Posterior cingulate gyrus (tissue), 11 donors: ENCODE measurements at regions of chr19 and their contacts with region 1.

Region 1: GRCh38 chr19:38699027-38699346 is 45.3 kb downstream of the CAPN12 start:
- DNase-seq: peak in 1 of 10 donors; percentile 81

Region 2: DNA sequence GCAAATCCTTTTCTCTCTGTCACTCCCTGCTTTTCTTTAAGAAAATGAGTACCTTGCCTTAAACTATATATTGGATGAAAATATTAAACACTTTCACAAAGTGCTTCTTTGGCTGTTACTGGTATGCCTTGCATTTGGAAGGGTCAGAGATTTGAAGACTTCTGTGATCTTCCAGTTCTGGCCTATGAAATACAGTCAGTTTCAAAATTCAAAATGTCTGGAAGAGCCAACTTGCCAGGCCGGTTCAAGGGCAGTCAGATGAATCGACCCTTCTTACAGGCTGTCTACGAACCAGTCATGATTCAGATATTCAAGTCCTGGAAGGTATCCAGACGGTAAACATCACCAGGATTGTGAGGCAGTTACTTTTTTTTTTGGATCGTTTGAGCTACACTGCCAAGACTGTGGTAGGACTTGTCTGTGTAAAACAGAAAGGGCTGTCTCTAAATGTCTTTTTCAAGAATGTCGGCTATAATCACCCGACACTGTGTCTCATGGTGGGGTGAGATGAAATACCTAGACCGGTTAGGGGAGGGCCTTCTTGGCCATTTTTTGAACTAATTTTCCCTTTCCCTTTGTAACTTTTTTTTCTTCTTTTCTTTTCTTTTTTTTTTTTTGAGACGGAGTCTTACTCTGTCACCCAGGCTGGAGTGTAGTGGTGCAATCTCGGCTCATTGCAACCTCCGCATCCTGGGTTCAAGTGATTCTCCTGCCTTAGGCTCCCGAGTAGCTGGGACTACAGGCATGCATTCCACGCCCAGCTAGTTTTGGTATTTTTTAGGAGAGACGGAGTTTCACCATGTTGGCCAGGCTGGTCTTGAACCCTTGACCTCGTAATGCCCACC is 40.3 kb before region 1 on chr19:
- intact Hi-C with region 1: loop called (anchors 5 kb)
- DNase-seq: peak in 2 of 10 donors; percentile 10 to 35